Vagina (tissue), 2 donors: ENCODE measurements at regions of chr2 and their contacts with region 1.

Region 1: GRCh38 chr2:170815746-170816503 is 762 bp upstream of the GAD1 start:
- DNase-seq: no peak
- H3K4me3 ChIP-seq: peak overlapping the region; percentile 34 to 41
- H3K27ac ChIP-seq: no peak overlapping the region
- H3K4me1 ChIP-seq: peaks cover 60% of the 10 kb centered on the region
- H3K27me3 ChIP-seq: peaks cover 52% of the 10 kb centered on the region
- CTCF ChIP-seq: peak; percentile 32 to 86 (median 67)
- POLR2A ChIP-seq: no peak

Region 2: DNA sequence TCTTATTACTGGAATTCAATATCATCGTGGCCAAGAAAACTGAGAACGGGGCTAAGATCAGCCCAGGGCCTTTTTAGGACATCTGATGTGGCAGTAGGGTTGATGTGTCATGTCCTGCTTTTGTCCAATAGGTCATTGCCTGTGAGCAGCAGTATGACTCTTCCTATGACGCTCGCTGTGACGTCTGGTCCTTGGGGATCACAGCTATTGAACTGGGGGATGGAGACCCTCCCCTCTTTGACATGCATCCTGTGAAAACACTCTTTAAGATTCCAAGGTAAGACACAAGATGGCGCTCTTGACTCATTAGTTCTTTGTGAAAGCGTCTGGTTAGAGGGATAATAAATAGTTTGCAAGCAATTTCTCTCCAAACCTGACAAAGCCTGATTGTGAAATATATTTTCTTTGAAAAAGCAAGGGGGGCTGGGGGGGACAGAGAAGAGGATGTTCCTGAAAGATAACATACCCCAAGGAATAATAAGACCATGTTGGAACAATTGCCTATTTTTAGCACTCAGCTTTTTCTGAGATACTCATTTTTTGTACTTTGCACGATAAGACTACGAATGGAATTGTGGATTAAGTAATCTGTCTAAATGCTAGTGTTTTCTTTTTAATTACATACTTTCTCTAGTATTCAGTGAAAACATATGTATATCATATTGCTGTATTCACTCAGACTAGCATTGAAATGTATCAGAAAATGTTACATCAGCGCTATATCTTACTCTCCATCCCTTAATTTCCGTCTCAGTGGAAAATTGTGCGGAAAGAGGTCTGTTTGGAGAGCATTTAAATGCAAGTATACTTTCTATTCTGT is 579.9 kb before region 1 on chr2:
- intact Hi-C with region 1: loop called (anchors 5 kb)
- DNase-seq: no peak
- H3K4me3 ChIP-seq: no peak overlapping the region
- H3K27ac ChIP-seq: no peak overlapping the region
- H3K4me1 ChIP-seq: no peaks in the 10 kb centered on the region
- H3K27me3 ChIP-seq: no peaks in the 10 kb centered on the region
- CTCF ChIP-seq: peak in 1 of 3 experiments; percentile 22
- POLR2A ChIP-seq: no peak

Region 3: GRCh38 chr2:170369894-170370293 is 446.0 kb before region 1 on chr2:
- intact Hi-C with region 1: loop called (anchors 10 kb)
- DNase-seq: no peak
- H3K4me3 ChIP-seq: no peak overlapping the region
- H3K27ac ChIP-seq: no peak overlapping the region
- H3K4me1 ChIP-seq: peaks cover 2% of the 10 kb centered on the region
- H3K27me3 ChIP-seq: no peaks in the 10 kb centered on the region
- CTCF ChIP-seq: peak in 1 of 3 experiments; percentile 22
- POLR2A ChIP-seq: no peak

Region 4: GRCh38 chr2:170411660-170412059 is 404.3 kb before region 1 on chr2:
- intact Hi-C with region 1: loop called (anchors 10 kb)
- DNase-seq: no peak
- H3K4me3 ChIP-seq: no peak overlapping the region
- H3K27ac ChIP-seq: no peak overlapping the region
- H3K4me1 ChIP-seq: peaks cover 5% of the 10 kb centered on the region
- H3K27me3 ChIP-seq: no peaks in the 10 kb centered on the region
- CTCF ChIP-seq: no peak
- POLR2A ChIP-seq: no peak

Region 5: DNA sequence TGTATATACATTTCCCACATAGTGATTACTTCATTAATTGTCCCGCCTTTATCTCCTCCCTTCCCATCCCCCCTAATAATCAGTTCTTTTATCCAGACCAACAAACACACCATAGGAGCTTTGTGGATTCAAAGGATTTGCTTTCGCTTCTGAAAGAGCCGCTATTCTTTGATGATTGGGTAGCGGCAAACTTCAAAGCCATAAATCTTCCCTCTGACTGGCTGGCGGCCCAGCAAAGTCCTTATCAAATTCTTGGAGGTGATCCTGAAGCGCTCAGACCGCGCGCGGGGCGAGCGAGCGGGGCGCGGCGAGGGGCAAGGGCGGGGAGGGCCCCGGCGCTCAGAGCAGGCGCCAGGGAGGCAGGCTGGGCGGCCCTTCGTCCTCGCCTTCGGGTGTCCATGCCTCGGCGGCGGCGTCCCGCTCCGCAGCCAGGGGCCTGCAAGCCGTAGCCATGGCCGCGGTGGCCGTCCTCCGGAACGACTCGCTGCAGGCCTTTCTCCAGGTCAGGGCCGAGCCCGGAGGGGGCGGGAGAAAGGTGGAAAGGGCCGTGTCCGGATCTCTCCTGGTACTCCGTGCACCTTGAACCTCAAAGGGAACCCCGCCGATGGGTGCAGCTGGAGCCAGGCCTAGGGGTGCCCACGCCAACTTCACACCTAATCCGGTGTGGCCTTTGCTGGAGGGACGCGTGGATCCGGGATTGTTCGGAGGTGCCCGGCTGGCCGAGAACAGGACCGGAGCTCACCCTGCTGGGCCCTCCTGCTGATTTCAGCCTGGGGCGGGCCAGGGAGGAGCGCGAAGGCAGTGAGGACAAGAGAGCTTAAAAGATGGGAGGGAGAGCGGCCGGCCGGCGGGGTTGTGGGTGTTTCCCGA is 100.6 kb before region 1 on chr2 and contains the start of gene SP5:
- intact Hi-C with region 1: loop called (anchors 10 kb)
- DNase-seq: no peak
- H3K4me3 ChIP-seq: peak within 1 kb of the TSS; percentile 45 to 62
- H3K27ac ChIP-seq: peak within 1 kb of the TSS; percentile 62
- H3K4me1 ChIP-seq: peaks cover 28% of the 10 kb centered on the region
- H3K27me3 ChIP-seq: peaks cover 12% of the 10 kb centered on the region
- CTCF ChIP-seq: no peak
- POLR2A ChIP-seq: peak in 1 of 2 donors; percentile 9
- total RNA-seq, gene SP5: 1.7 TPM

Region 6: GRCh38 chr2:171319164-171319810 is 503.4 kb after region 1 on chr2:
- intact Hi-C with region 1: no loop called
- DNase-seq: no peak
- H3K4me3 ChIP-seq: no peak overlapping the region
- H3K27ac ChIP-seq: no peak overlapping the region
- H3K4me1 ChIP-seq: peaks cover 9% of the 10 kb centered on the region
- H3K27me3 ChIP-seq: no peaks in the 10 kb centered on the region
- CTCF ChIP-seq: no peak
- POLR2A ChIP-seq: no peak